Heart right ventricle (tissue), 16 donors: ENCODE measurements at regions of chr10 and their contacts with region 1.

Region 1: GRCh38 chr10:131760416-131761166 is 140.2 kb upstream of the PPP2R2D start:
- DNase-seq: no peak
- ATAC-seq: no peak
- H3K4me3 ChIP-seq: no peak overlapping the region
- H3K27ac ChIP-seq: no peak overlapping the region
- H3K4me1 ChIP-seq: no peaks in the 10 kb centered on the region
- H3K27me3 ChIP-seq: peaks cover 0 to 29% (median 6%) of the 10 kb centered on the region in 7 donors
- CTCF ChIP-seq: no peak

Region 2: GRCh38 chr10:130531312-130531711 is 1229.3 kb before region 1 on chr10:
- intact Hi-C with region 1: loop called in 1 of 10 experiments (anchors 5 kb)
- DNase-seq: no peak
- ATAC-seq: no peak
- H3K4me3 ChIP-seq: no peak overlapping the region
- H3K27ac ChIP-seq: no peak overlapping the region
- H3K4me1 ChIP-seq: no peaks in the 10 kb centered on the region
- H3K27me3 ChIP-seq: peaks cover 0 to 4% (median 0%) of the 10 kb centered on the region in 7 donors
- CTCF ChIP-seq: no peak

Region 3: DNA sequence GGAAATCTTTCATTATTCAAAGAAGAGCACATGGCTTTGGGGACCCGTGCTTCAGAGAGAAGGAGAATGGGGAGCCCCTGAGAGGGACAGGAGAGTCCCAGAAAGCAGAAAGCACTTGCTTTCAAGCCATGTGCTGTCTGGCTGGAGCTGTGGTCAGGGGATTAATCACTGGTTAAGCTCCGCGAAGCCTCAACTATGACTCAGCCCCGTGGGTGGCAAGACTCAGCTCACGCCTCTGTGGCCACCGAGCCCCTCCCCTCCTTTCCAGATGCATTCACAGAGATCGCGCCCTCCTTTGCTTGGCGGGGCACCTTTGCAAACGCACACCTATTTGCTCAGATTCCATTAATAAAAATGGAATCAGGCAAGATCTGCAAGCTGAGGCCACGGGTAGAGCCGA is 246.1 kb before region 1 on chr10:
- intact Hi-C with region 1: no loop called
- DNase-seq: no peak
- ATAC-seq: no peak
- H3K4me3 ChIP-seq: no peak overlapping the region
- H3K27ac ChIP-seq: no peak overlapping the region
- H3K4me1 ChIP-seq: no peaks in the 10 kb centered on the region
- H3K27me3 ChIP-seq: peaks cover 0 to 38% (median 6%) of the 10 kb centered on the region in 7 donors
- CTCF ChIP-seq: no peak

Region 4: DNA sequence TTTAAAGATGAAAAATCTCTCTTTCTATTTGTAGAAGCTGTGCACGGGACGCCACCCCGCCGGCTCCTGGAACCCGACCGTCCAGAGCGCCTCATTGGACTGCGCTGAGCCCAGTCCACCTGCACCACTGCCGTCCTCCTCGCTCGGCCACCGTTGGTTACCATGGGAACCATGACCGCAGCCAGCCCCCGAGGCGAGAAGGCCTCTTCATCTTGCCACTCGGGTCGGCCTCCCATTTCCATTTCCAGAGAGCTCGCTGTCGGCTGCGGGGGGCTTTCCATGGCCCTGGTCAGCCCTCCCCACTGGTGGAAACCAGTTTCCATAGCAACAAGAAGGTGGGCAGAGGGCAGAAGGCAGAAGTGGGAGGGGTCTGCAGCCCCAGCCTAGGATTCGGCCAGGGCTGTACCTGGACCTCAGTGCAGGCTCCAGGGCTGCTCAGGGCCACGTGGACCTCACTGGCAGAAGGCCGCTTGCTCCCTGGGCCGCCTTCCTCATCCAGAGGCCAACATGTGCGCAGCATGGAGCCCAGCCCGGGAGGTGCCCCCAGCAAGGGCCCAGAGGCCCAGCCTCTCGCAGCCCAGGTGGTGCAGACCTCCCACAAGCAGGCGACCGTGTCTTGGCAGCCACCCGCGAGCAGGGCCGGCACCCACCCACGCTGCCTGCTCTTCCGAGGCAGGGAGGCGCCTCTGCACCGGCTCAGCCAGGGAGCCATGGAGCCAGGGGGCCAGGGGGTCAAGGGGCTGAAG is 143.3 kb before region 1 on chr10:
- intact Hi-C with region 1: no loop called
- DNase-seq: no peak
- ATAC-seq: no peak
- H3K4me3 ChIP-seq: no peak overlapping the region
- H3K27ac ChIP-seq: no peak overlapping the region
- H3K4me1 ChIP-seq: no peaks in the 10 kb centered on the region
- H3K27me3 ChIP-seq: peaks cover 0 to 26% (median 16%) of the 10 kb centered on the region in 7 donors
- CTCF ChIP-seq: no peak

Region 5: GRCh38 chr10:131726076-131726880 is 34.3 kb before region 1 on chr10:
- intact Hi-C with region 1: no loop called
- DNase-seq: peak; percentile 50 to 53
- ATAC-seq: peak in 7 of 8 donors; percentile 51 to 76 (median 56)
- H3K4me3 ChIP-seq: peak overlapping the region in 4 of 10 donors; percentile 10 to 25 (median 16)
- H3K27ac ChIP-seq: no peak overlapping the region
- H3K4me1 ChIP-seq: peaks cover 0 to 14% (median 6%) of the 10 kb centered on the region in 9 donors
- H3K27me3 ChIP-seq: peaks cover 0 to 24% (median 3%) of the 10 kb centered on the region in 7 donors
- CTCF ChIP-seq: no peak